Lower leg skin (tissue), 4 donors: ENCODE measurements at regions of chr2 and their contacts with region 1.

Region 1: GRCh38 chr2:238370823-238371372 is 50.6 kb downstream of the TRAF3IP1 start:
- DNase-seq: peak in 1 of 2 donors; percentile 51
- H3K4me3 ChIP-seq: no peak overlapping the region
- CTCF ChIP-seq: peak in 1 of 3 donors; percentile 47
- POLR2A ChIP-seq: no peak

Region 2: DNA sequence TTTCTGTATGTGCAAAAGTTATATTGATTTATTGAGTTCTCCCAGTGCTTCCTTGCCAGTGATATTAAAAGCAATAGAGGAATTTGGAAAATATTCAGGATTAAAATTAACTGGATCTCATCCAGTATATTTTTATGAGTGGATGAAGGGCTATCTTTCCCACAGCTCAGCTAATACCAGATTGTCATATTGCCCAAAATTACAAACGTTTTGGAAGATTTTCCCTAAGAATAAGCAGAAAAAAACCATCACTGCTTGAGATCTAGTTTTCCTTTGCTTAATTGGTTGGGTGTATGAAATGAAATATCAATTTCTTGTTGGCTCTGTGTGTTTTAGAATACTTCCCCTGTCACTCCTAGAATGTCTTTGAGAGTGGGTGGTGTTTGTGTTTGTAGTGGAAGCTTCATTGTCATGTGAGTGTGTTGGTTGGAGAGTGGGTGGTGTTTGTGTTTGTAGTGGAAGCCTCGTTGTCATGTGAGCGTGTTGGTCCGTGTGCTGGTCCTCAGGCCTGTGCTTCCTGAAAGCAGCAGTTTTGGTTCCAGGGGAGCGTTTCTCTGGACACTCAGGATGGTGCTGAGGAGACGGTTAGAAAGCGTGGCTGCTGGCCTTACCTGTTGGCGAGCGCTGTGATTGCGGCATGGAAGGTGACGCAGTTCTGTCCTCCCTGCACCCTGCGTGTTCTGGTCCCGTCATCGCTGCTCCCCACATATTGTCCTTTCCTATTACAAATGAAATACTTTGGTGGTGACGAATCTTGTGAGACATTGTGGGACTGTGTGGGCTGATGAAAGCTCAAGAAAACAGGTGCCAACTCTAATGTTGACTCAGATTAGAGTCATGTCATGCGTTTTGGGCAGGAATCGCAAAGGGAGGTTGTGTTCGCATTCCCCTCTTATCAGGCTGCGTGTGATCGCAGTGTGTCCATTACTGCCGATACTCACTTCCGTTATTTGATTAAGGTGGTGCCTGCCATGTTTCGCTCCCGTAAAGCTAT is 68.3 kb after region 1 on chr2:
- intact Hi-C with region 1: loop called (anchors 10 kb)
- DNase-seq: peak in 1 of 2 donors; percentile 84
- H3K4me3 ChIP-seq: no peak overlapping the region
- CTCF ChIP-seq: no peak
- POLR2A ChIP-seq: no peak

Region 3: GRCh38 chr2:238784671-238785527 is 414.0 kb after region 1 on chr2:
- intact Hi-C with region 1: loop called (anchors 5 kb)
- DNase-seq: peak; percentile 75 to 94
- H3K4me3 ChIP-seq: no peak overlapping the region
- CTCF ChIP-seq: peak in 1 of 3 donors; percentile 77
- POLR2A ChIP-seq: no peak

Region 4: GRCh38 chr2:239959059-239959971 is 1588.4 kb after region 1 on chr2:
- intact Hi-C with region 1: no loop called
- DNase-seq: no peak
- H3K4me3 ChIP-seq: no peak overlapping the region
- CTCF ChIP-seq: no peak
- POLR2A ChIP-seq: no peak